Colonic mucosa (tissue), 4 donors: ENCODE measurements at regions of chr19 and their contacts with region 1.

Region 1: GRCh38 chr19:8252922-8253589 is 43.9 kb downstream of the CERS4 start:
- DNase-seq: peak; percentile 85
- H3K4me3 ChIP-seq: no peak overlapping the region
- H3K27ac ChIP-seq: no peak overlapping the region
- H3K4me1 ChIP-seq: no peaks in the 10 kb centered on the region
- H3K27me3 ChIP-seq: no peaks in the 10 kb centered on the region
- CTCF ChIP-seq: peak; percentile 98

Region 2: DNA sequence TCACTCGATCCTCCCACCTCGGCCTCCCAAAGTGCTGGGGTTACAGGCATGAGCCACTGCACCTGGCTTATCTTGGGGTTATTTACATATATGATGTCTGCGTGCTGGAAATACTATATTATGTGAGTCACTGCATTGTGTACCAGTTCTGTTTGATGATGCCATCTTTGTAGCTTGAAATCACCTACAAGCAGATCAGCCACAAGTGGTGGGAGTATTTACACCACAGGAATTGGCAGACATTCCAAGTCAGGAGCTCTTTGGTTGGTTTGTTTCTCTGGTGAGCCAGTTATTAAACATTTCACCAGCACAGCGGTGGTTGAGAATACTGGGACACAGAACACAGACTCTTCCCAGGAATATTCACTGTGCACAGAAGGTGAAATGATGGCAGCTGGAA is 305.1 kb before region 1 on chr19:
- intact Hi-C with region 1: loop called (anchors 5 kb)
- DNase-seq: no peak
- H3K4me3 ChIP-seq: no peak overlapping the region
- H3K27ac ChIP-seq: no peak overlapping the region
- H3K4me1 ChIP-seq: no peaks in the 10 kb centered on the region
- H3K27me3 ChIP-seq: no peaks in the 10 kb centered on the region
- CTCF ChIP-seq: no peak

Region 3: GRCh38 chr19:8017808-8018207 is 235.2 kb before region 1 on chr19:
- intact Hi-C with region 1: loop called (anchors 5 kb)
- DNase-seq: peak; percentile 41
- H3K4me3 ChIP-seq: no peak overlapping the region
- H3K27ac ChIP-seq: no peak overlapping the region
- H3K4me1 ChIP-seq: no peaks in the 10 kb centered on the region
- H3K27me3 ChIP-seq: no peaks in the 10 kb centered on the region
- CTCF ChIP-seq: peak; percentile 31

Region 4: DNA sequence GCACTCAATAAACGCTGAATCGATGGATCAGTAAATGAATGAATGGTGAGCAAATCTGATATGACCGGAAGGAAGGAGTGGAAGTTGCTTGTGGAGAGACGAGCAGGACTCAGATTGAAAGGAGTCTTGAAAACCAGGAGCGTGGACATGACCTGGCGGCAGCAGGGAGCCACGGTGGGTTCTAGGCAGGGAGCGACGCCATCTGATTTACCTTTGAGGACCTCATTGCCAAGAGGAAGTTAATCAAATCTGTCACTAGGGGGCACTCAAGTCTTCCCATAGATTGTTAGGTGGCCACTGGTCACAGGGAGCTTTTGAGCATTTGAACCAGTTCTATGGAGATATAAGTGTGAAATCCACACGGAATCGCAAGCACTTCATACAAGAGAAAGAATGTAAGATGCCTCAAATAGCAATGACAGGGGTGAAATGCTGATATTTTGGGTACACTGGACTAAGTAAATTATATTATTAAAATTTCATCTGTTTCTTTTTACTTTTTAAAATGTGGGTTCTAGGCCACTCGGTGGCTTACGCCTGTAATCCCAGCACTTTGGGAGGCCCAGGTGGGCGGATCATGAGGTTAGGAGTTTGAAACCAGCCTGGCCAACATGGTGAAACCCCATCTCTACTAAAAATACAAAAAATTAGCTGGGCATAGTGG is 94.5 kb before region 1 on chr19:
- intact Hi-C with region 1: loop called (anchors 5 kb)
- DNase-seq: peak; percentile 49
- H3K4me3 ChIP-seq: no peak overlapping the region
- H3K27ac ChIP-seq: no peak overlapping the region
- H3K4me1 ChIP-seq: no peaks in the 10 kb centered on the region
- H3K27me3 ChIP-seq: no peaks in the 10 kb centered on the region
- CTCF ChIP-seq: peak; percentile 34